ENCODE measurements at regions of chr2 and their contacts with region 1.

Region 1: DNA sequence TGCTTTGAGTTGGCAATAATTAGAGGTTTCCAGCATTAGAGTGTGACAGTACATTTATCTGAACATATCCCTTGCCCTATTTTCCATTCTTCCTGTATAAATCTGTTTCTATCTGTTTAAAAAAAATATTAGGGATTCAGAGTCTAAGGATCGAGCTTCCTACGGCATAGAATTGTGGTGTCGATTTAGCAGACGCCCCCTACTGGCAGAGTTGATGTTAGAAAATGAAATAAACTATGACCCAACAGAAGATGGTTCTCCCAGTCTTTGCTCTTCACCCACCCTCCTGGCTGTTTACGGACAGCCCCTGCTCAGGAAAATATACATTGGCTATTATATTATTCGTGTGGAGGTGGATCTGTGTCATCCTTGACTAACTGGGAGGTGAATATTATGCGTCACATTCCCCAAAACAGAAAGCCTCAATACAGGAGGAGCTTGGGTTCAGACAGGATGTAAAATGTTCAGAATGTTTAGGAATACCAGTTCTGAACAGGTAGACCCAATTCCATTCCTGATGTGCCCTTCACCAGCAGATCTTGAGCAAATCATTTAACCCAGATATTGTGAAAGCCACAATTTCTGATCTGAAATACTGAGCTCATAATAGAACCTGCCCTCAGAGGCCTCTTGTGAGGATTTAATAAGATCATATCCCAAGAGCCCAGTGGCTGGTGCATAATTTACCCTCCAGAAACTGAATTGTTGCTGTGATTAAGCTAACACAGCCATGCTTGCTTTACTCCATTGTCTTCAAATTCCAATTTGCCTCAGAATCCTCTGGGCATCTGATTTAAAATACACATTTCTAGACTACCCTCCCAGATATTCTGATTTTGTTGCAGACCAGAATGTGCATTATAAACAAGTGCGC is 10.8 kb upstream of the ERMN start:
- DNase-seq: peak; percentile 61
- ATAC-seq: no peak
- H3K4me3 Mint-ChIP-seq: no peak overlapping the region
- H3K27ac Mint-ChIP-seq: no peak overlapping the region
- H3K4me1 Mint-ChIP-seq: peaks cover 41% of the 10 kb centered on the region
- H3K27me3 Mint-ChIP-seq: no peaks in the 10 kb centered on the region

Region 2: DNA sequence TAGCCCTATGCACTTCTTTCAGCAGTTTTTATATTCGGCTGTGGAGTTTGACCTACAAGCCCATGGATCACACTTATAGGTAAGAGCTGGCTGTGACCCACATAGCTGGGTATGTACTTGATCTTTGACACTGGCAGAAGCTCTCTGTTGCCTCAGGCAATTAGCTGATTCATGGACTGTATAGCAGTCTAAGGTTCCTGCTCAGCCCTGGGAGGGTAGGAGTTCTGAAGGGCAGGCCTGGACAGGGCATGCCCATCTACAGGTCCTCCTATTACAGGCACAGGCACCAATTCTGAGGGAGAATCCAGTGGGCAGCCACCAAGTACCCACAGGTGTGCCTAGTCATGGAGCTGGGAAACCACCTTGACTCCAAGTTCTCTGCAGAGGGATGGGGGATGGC is 380.7 kb before region 1 on chr2:
- CTCF ChIA-PET with region 1: no interaction called
- POLR2A ChIA-PET with region 1: no interaction called
- DNase-seq: no peak
- ATAC-seq: no peak
- H3K4me3 Mint-ChIP-seq: no peak overlapping the region
- H3K27ac Mint-ChIP-seq: no peak overlapping the region
- H3K4me1 Mint-ChIP-seq: no peaks in the 10 kb centered on the region
- H3K27me3 Mint-ChIP-seq: no peaks in the 10 kb centered on the region

Region 3: DNA sequence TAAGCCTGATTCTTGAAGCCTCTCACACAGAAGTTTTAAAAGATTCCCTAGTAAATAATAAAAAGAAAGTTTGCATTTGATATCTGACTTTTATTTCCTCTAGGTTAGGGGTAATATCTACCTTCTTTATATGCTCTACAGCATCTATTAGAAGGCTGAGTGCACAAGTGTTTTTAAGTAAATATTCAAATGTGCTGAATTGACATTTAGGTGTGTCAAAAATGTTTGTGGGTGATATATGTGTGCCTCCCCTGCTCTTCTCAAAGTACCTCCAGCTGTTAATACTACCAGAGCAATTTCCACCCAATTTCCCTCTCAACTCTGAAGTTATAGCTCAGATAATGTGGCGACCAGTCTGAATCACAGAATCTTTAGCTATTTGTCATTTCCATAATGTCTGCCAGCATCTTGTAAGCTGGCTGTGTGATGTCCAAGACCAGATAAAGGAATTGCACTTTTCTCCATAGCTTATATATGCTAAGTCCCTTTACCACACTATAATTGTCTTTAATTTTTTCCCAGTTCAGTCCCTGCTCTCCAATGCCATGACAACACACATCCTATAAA is 13.7 kb after region 1 on chr2:
- CTCF ChIA-PET with region 1: interaction called, 151 read pairs
- POLR2A ChIA-PET with region 1: no interaction called
- DNase-seq: no peak
- ATAC-seq: no peak
- H3K4me3 Mint-ChIP-seq: no peak overlapping the region
- H3K27ac Mint-ChIP-seq: no peak overlapping the region
- H3K4me1 Mint-ChIP-seq: peaks cover 14% of the 10 kb centered on the region
- H3K27me3 Mint-ChIP-seq: no peaks in the 10 kb centered on the region

Region 4: GRCh38 chr2:157363612-157364101 is 27.3 kb after region 1 on chr2:
- CTCF ChIA-PET with region 1: interaction called, 33 read pairs
- POLR2A ChIA-PET with region 1: no interaction called
- DNase-seq: no peak
- ATAC-seq: peak; percentile 18
- H3K4me3 Mint-ChIP-seq: peak overlapping the region; percentile 3
- H3K27ac Mint-ChIP-seq: peak overlapping the region; percentile 62
- H3K4me1 Mint-ChIP-seq: peaks cover 28% of the 10 kb centered on the region
- H3K27me3 Mint-ChIP-seq: no peaks in the 10 kb centered on the region

Region 5: GRCh38 chr2:157375384-157375783 is 39.0 kb after region 1 on chr2:
- CTCF ChIA-PET with region 1: no interaction called
- POLR2A ChIA-PET with region 1: no interaction called
- DNase-seq: no peak
- ATAC-seq: no peak
- H3K4me3 Mint-ChIP-seq: no peak overlapping the region
- H3K27ac Mint-ChIP-seq: no peak overlapping the region
- H3K4me1 Mint-ChIP-seq: peaks cover 6% of the 10 kb centered on the region
- H3K27me3 Mint-ChIP-seq: no peaks in the 10 kb centered on the region

Region 6: DNA sequence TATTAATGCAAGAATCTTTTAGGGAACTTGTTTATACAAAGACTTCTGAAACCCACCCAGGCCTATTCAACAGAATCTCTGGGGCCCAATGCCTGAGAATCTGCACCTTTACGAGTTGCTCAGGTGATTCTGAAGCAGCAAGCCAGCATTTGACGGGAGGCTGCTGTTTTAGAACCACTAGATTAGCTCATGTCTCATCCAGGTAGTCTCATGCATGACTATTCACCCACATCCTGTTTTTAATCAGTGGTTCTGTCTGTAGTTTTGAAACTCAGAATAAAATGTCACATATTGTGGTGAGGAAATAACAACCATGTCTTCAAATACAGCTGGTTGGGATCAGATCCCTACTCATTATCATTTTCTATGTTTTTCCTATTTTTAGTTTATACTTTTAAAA is 68.0 kb after region 1 on chr2:
- CTCF ChIA-PET with region 1: interaction called, 44 read pairs
- POLR2A ChIA-PET with region 1: interaction called, 3 read pairs
- DNase-seq: peak; percentile 78
- ATAC-seq: peak; percentile 97
- H3K4me3 Mint-ChIP-seq: peak overlapping the region; percentile 15
- H3K27ac Mint-ChIP-seq: peak overlapping the region; percentile 84
- H3K4me1 Mint-ChIP-seq: peaks cover 70% of the 10 kb centered on the region
- H3K27me3 Mint-ChIP-seq: no peaks in the 10 kb centered on the region

Region 7: GRCh38 chr2:157420771-157421323 is 84.5 kb after region 1 on chr2:
- CTCF ChIA-PET with region 1: interaction called, 19 read pairs
- POLR2A ChIA-PET with region 1: interaction called, 3 read pairs
- DNase-seq: no peak
- ATAC-seq: peak; percentile 10
- H3K4me3 Mint-ChIP-seq: peak overlapping the region; percentile 45
- H3K27ac Mint-ChIP-seq: peak overlapping the region; percentile 81
- H3K4me1 Mint-ChIP-seq: peaks cover 75% of the 10 kb centered on the region
- H3K27me3 Mint-ChIP-seq: no peaks in the 10 kb centered on the region

Region 8: GRCh38 chr2:157480182-157480961 is 144.0 kb after region 1 on chr2:
- CTCF ChIA-PET with region 1: interaction called, 10 read pairs
- POLR2A ChIA-PET with region 1: no interaction called
- DNase-seq: peak; percentile 57
- ATAC-seq: peak; percentile 32
- H3K4me3 Mint-ChIP-seq: peak overlapping the region; percentile 80
- H3K27ac Mint-ChIP-seq: peak overlapping the region; percentile 98
- H3K4me1 Mint-ChIP-seq: peaks cover 79% of the 10 kb centered on the region
- H3K27me3 Mint-ChIP-seq: no peaks in the 10 kb centered on the region

Measured in activated CD8-positive, alpha-beta T cell treated with anti-CD3 and anti-CD28 coated beads, Interleukin-2, amount 10 ng/mL, durations not matched to agents 7 days and 5 days (primary cell).